ENCODE measurements at regions of chr17 and their contacts with region 1.

Region 1: DNA sequence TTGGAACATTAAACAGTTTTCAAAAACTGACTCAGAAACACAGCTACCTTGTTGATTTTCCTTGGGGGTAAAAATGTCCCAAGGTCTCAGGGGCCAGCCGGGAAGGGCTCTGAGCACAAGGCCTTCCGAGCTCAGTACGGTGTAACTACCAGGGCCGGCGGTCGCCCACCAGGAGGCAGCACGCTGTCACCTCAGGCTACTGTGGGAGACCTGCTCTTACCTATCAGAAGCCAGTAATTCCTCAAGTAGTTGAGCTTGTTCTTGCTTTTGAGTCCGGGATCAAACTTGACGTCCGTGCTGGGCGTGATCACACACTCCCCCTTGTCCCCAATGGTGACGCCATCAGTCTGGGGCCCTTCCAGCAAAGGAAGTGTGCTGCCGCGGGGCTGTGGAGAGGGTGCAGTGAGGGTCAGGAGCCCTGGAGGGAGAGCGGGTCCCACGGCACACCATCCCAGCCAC is 43.4 kb upstream of the ICAM2 start:
- DNase-seq: no peak
- CTCF ChIP-seq: peak; percentile 72

Region 2: GRCh38 chr17:63950941-63951507 is 112.8 kb before region 1 on chr17:
- CTCF ChIA-PET with region 1: no interaction called
- POLR2A ChIA-PET with region 1: no interaction called
- DNase-seq: peak; percentile 77
- CTCF ChIP-seq: peak; percentile 67

Region 3: GRCh38 chr17:64045176-64045575 is 18.6 kb before region 1 on chr17:
- CTCF ChIA-PET with region 1: interaction called, 17 read pairs
- POLR2A ChIA-PET with region 1: no interaction called
- DNase-seq: no peak
- CTCF ChIP-seq: no peak

Region 4: GRCh38 chr17:64073771-64074703 is 10.2 kb after region 1 on chr17:
- CTCF ChIA-PET with region 1: interaction called, 57 read pairs
- POLR2A ChIA-PET with region 1: interaction called, 4 read pairs
- DNase-seq: peak; percentile 71
- CTCF ChIP-seq: no peak

Region 5: GRCh38 chr17:64091116-64091515 is 27.3 kb after region 1 on chr17:
- CTCF ChIA-PET with region 1: interaction called, 10 read pairs
- POLR2A ChIA-PET with region 1: no interaction called
- DNase-seq: peak; percentile 55
- CTCF ChIP-seq: no peak

Region 6: DNA sequence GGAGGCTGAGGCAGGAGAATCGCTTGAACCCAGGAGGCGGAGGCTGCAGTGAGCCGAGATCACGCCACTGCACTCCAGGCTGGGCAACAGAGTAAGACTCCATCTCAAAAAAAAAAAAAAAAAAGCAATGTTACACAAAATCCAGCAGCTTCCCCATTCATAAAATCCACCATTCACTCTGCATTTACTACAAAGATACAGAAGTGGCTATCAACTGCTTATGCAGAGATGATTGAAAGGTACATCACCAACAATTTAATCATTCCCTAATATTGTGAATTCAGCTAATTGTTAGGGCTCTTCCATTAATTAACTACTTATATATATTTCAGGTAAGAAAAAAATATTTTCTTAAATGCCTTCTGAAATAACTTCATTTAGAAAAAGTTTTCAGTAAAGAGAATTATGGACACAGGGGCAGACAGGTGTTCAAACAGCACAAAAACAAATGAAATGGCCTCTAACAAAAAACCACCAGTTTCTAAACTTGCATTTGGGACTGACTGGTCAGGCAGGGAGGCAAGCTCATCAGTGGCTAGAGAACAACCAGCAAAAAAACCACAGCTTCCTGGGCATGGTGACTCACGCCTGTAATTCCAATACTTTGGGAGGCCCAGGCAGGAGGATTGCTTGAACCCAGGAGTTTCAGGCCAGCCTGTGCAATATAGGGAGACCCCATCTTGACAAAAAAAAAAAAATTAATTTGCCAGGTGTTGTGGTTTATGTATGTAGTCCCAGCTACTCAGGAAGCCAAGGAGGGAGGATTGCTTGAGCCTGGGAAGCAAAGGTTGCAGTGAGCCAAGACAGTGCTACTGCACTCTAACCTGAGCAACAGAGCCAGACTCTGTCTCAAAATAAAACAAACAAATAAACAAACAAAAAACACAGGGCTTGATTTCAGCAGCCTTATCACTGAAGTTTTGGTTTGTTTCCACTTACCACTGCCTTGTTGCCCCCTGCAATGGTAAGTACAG is 39.9 kb after region 1 on chr17:
- CTCF ChIA-PET with region 1: interaction called, 15 read pairs
- POLR2A ChIA-PET with region 1: no interaction called
- DNase-seq: no peak
- CTCF ChIP-seq: no peak

Region 7: DNA sequence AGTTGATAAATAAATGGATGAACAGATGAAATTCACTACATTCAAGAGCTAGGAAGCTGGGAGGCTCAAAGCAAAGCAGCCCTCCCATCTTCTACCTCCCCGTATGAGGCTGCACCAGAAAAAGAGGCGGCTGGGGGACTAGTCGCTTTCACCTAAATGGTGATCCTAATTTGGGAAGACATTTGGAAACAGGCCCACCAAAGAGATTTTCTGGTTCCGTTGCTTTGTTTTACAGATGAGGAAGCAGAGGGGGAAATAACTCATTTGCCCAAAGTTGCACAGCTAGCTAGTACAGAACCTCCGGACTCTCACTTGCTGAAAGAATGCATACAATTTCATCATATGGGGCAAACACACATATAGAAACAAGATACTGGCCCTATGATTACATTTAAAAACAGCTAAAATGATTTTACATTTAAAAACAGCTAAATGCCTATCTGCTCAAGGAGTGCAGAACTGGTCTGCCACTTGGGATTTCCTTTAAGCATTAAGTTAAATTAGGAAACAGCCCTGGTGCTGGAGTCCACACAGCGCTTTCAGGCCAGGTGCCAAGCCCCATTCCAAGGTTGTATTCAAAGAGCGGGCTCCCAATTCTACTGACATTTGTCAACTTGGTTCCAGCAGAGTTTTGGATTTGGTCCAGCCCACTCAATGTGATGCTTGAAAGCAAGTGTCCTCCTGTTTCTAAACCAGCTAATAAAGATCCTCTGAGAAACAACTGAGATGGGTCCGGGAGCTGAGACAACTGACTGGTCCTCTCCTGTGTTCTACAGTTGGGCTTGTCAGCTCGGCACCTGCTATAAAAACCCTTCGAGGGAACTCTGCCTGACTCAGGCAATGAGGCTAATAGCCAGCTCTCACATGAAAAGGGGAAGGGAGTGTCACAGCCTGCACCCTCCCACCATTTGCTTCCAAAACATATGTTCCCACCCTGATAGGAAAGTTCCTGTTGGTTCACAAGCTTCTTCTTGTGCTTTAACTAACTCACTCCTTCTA is 54.5 kb after region 1 on chr17:
- CTCF ChIA-PET with region 1: interaction called, 15 read pairs
- POLR2A ChIA-PET with region 1: no interaction called
- DNase-seq: no peak
- CTCF ChIP-seq: no peak

Measured in GM10248 (cell line).